BJ (cell line): ENCODE measurements at regions of chr11 and their contacts with region 1.

Region 1: DNA sequence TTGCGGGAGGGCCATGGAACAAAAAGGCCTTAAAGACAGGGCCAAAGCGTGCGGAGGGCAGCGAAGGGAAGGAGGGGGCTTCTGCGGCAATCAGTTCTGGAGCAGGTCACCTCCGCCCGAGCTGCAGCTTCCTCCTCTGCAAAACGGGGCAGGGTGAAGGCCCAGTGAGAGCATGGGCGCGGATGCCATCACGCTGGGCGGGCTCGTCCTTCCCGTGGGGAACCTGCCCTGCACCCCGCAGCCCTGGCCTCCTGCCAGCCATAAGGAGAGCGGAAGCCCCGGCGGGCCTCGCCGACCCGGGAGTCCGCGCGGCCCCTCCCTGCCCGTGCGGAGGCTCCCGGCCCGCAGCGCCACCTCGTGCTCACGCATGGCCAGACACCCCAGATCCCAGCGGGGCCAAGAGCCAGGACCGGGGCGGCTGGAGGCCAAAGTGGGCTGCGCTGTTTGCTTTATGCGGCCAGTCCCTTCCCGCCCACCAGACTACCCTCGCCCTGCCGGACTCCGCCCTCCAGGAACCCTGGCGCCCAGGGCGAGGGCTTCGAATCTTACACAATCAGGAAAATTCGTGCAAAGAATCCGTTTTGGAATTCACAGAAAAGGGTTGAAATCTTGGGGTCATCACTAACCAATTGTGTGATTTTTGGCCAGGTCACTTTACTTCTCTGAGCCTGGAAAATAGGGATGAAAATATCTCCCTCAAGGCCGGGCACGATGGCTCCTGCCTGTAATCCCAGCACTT is 16.1 kb downstream of the TSKU start:
- DNase-seq: no peak
- H3K4me3 ChIP-seq: no peak overlapping the region
- H3K27me3 ChIP-seq: no peaks in the 10 kb centered on the region
- CTCF ChIP-seq: peak; percentile 77

Region 2: GRCh38 chr11:76680518-76681425 is 118.5 kb before region 1 on chr11:
- CTCF ChIA-PET with region 1: no interaction called
- POLR2A ChIA-PET with region 1: no interaction called
- DNase-seq: no peak
- H3K4me3 ChIP-seq: no peak overlapping the region
- H3K27me3 ChIP-seq: peaks cover 10% of the 10 kb centered on the region
- CTCF ChIP-seq: peak; percentile 89

Region 3: DNA sequence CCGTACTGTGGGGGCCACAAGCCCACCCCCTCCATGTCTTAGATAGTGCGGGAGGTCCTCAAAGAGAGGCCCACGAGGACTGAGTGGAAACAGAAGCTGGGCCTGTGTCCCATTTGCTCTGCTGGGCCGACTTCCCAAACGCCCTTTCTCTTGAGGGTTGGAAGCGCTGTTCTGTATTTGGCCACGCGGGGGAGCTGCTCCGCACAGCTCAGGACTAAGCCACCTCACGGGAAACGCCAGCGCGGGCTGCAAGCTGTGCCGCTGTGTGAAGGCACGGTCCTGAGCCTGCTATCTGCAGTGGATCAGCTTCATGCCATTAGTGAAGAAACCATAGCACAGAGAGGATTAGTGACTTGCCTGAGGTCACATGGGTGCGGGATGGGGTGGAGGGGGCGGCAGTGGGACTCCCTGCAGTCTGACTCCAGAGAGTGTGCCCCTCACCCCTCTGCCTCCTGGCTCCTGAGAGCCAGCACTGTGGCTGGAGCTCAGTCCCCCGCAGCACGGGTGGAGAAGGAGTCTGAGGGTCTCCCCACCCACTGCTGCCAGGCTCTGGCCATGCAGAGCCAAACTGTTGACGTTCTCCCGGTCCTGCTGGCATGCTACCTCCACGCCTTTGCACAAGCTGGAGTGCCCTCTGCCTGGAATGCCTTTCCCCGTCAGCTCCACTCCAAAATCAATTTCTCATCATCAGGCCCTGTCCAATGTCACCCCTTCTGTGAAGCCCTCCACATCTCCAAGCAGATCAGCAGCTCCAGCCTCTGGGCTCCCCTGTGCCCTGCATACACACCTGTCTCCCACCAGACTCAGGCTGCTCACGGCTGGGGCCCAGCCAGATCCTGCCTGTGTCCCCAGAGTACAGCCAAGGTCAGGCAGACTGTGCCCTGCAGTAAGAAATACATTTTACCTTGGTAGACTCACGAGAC is 77.2 kb before region 1 on chr11:
- CTCF ChIA-PET with region 1: interaction called, 47 read pairs
- POLR2A ChIA-PET with region 1: no interaction called
- DNase-seq: no peak
- H3K4me3 ChIP-seq: no peak overlapping the region
- H3K27me3 ChIP-seq: peaks cover 13% of the 10 kb centered on the region
- CTCF ChIP-seq: peak; percentile 97

Region 4: GRCh38 chr11:76734456-76735420 is 64.5 kb before region 1 on chr11:
- CTCF ChIA-PET with region 1: interaction called, 179 read pairs
- POLR2A ChIA-PET with region 1: no interaction called
- DNase-seq: no peak
- H3K4me3 ChIP-seq: no peak overlapping the region
- H3K27me3 ChIP-seq: peaks cover 7% of the 10 kb centered on the region
- CTCF ChIP-seq: no peak

Region 5: DNA sequence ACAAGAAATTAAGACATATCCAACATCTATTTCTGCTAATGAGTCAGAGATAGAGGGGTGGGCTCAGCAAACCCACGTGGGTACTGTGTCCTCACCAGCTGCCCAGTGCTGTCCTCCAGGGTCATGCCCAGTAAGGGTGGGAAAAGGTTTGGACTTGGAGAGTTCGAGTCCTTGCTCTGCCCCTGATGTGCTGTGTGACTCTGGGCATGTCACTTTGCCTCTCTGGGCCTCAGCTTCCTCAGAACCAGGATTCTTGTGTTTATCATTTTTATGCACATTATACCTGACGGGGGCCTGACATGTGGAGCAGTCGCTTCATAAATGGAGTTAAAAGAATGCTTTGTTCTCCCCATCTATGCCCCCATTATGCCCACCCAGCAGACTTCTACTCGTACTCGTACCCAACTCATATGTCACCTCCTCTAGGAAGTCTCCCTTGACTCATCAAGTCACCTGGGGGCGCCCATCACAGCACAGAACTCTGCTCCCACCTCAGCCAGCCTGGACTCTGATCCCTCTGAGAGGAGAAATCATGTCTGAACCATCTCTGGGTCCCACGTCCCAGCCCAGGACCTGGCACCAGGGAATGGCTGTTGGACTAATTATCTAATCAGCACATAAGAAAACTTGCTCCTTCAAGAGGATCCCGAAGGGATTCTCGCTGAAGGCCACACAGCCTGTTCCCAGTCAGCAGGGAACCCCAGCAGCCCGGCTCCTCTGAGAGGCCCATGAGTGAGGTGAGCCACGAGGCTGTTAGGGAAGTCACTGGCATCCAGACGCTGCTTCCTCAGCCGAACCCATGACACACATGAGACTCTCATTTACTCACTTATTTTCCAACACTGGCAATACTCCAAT is 54.8 kb before region 1 on chr11:
- CTCF ChIA-PET with region 1: interaction called, 15 read pairs
- POLR2A ChIA-PET with region 1: no interaction called
- DNase-seq: no peak
- H3K4me3 ChIP-seq: no peak overlapping the region
- H3K27me3 ChIP-seq: no peaks in the 10 kb centered on the region; the same call in 1 of the 2 replicates
- CTCF ChIP-seq: no peak

Region 6: GRCh38 chr11:76782526-76783293 is 16.5 kb before region 1 on chr11:
- CTCF ChIA-PET with region 1: interaction called, 23 read pairs
- POLR2A ChIA-PET with region 1: no interaction called
- DNase-seq: peak; percentile 70
- H3K4me3 ChIP-seq: peak overlapping the region; percentile 97
- H3K27me3 ChIP-seq: peaks cover 6% of the 10 kb centered on the region
- CTCF ChIP-seq: no peak

Region 7: GRCh38 chr11:76788661-76789439 is 10.4 kb before region 1 on chr11:
- CTCF ChIA-PET with region 1: interaction called, 23 read pairs
- POLR2A ChIA-PET with region 1: no interaction called
- DNase-seq: no peak
- H3K4me3 ChIP-seq: no peak overlapping the region
- H3K27me3 ChIP-seq: no peaks in the 10 kb centered on the region
- CTCF ChIP-seq: no peak